MCF 10A (cell line): ENCODE measurements at regions of chr4 and their contacts with region 1.

Region 1: GRCh38 chr4:154854362-154854761 is 73.3 kb downstream of the RBM46 start:
- DNase-seq: peak; percentile 57
- H3K4me3 Mint-ChIP-seq: no peak overlapping the region
- H3K27ac Mint-ChIP-seq: no peak overlapping the region
- H3K4me1 Mint-ChIP-seq: peaks cover 6% of the 10 kb centered on the region
- H3K27me3 Mint-ChIP-seq: no peaks in the 10 kb centered on the region
- CTCF ChIP-seq: peak; percentile 67

Region 2: DNA sequence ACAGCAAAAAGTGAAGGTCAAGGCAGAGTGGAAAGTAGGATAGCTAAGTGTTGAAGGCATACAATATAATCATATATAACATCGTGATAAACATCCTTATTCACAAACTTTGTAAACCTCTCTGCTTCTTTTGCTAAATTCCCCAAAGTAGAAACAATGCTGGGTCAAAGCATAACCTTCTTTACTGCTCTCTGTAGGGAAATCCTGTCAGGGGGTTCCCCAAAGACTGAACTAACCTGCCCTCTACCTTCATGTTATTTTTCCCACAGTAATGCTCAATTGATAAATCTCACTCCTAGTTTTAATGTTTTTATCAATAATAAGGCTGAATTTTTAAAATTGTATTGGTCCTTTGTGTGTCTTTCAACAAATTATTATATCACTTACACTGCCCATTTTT is 418.5 kb before region 1 on chr4:
- CTCF ChIA-PET with region 1: no interaction called
- POLR2A ChIA-PET with region 1: no interaction called
- intact Hi-C with region 1: no loop called
- DNase-seq: no peak
- H3K4me3 Mint-ChIP-seq: no peak overlapping the region
- H3K27ac Mint-ChIP-seq: no peak overlapping the region
- H3K4me1 Mint-ChIP-seq: no peaks in the 10 kb centered on the region
- H3K27me3 Mint-ChIP-seq: no peaks in the 10 kb centered on the region
- CTCF ChIP-seq: no peak

Region 3: DNA sequence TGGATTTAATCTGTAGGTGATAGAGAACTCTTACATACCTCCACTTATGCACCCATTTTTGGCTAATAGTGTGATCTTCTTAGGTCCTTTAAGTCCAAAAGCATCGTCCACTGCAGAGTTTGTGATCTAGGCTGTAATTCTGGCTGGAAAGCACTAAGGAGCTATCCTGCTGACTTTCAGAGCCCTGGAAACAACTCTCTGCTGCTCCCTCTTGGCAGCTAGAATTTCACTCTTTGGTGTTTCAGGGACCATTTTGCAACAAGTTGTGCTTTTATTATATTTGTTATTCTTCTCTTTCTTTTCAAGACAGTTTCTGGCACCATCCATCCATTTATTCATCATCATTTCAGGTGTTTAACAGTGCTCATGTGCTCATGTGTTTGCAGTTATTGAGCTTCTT is 56.7 kb after region 1 on chr4:
- CTCF ChIA-PET with region 1: interaction called, 10 read pairs
- POLR2A ChIA-PET with region 1: no interaction called
- intact Hi-C with region 1: no loop called
- DNase-seq: peak; percentile 23
- H3K4me3 Mint-ChIP-seq: no peak overlapping the region
- H3K27ac Mint-ChIP-seq: no peak overlapping the region
- H3K4me1 Mint-ChIP-seq: peaks cover 14% of the 10 kb centered on the region
- H3K27me3 Mint-ChIP-seq: no peaks in the 10 kb centered on the region
- CTCF ChIP-seq: no peak

Region 4: GRCh38 chr4:154928640-154929257 is 74.4 kb after region 1 on chr4:
- CTCF ChIA-PET with region 1: interaction called, 19 read pairs
- POLR2A ChIA-PET with region 1: no interaction called
- intact Hi-C with region 1: loop called (anchors 1 kb)
- DNase-seq: peak; percentile 54
- H3K4me3 Mint-ChIP-seq: no peak overlapping the region
- H3K27ac Mint-ChIP-seq: no peak overlapping the region
- H3K4me1 Mint-ChIP-seq: peaks cover 5% of the 10 kb centered on the region
- H3K27me3 Mint-ChIP-seq: no peaks in the 10 kb centered on the region
- CTCF ChIP-seq: peak; percentile 46

Region 5: GRCh38 chr4:154942176-154942575 is 87.8 kb after region 1 on chr4:
- CTCF ChIA-PET with region 1: no interaction called
- POLR2A ChIA-PET with region 1: no interaction called
- intact Hi-C with region 1: no loop called
- DNase-seq: no peak
- H3K4me3 Mint-ChIP-seq: no peak overlapping the region
- H3K27ac Mint-ChIP-seq: no peak overlapping the region
- H3K4me1 Mint-ChIP-seq: peaks cover 6% of the 10 kb centered on the region
- H3K27me3 Mint-ChIP-seq: no peaks in the 10 kb centered on the region
- CTCF ChIP-seq: no peak

Region 6: GRCh38 chr4:155114790-155115189 is 260.4 kb after region 1 on chr4:
- CTCF ChIA-PET with region 1: no interaction called
- POLR2A ChIA-PET with region 1: no interaction called
- intact Hi-C with region 1: no loop called
- DNase-seq: no peak
- H3K4me3 Mint-ChIP-seq: no peak overlapping the region
- H3K27ac Mint-ChIP-seq: no peak overlapping the region
- H3K4me1 Mint-ChIP-seq: no peaks in the 10 kb centered on the region
- H3K27me3 Mint-ChIP-seq: no peaks in the 10 kb centered on the region
- CTCF ChIP-seq: no peak

Region 7: GRCh38 chr4:155170569-155170968 is 316.2 kb after region 1 on chr4:
- CTCF ChIA-PET with region 1: no interaction called
- POLR2A ChIA-PET with region 1: no interaction called
- intact Hi-C with region 1: no loop called
- DNase-seq: no peak
- H3K4me3 Mint-ChIP-seq: no peak overlapping the region
- H3K27ac Mint-ChIP-seq: no peak overlapping the region
- H3K4me1 Mint-ChIP-seq: peaks cover 8% of the 10 kb centered on the region
- H3K27me3 Mint-ChIP-seq: no peaks in the 10 kb centered on the region
- CTCF ChIP-seq: no peak

Region 8: DNA sequence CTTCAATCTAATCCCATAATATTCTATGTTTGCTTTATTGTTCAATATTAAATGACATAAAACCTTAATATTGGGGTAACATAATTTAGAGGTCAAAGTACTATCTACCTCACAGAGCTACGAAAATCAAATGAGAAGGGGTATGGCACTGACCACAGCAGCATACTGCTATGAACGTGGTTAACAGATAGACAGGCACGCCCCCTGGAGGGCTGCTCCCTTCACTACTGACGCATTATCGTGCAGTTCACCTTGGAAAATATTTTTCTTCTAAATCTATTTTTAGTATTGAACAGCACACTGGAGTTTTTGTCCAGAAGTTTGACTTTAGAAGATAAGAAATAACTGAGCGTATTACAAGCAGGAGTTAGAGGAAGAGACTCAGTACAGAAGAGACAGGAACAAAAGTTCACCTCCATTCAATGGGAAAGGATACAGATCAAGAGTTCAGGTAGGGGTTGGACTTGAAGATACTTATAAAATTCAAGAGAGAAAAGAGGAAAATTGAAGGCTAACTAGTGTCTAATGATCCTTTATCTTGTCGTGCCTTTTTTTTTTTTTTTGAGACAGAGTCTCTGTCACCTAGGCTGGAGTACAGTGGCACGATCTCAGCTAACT is 499.7 kb after region 1 on chr4:
- CTCF ChIA-PET with region 1: interaction called, 9 read pairs
- POLR2A ChIA-PET with region 1: no interaction called
- intact Hi-C with region 1: loop called (anchors 1 kb)
- DNase-seq: peak; percentile 66
- H3K4me3 Mint-ChIP-seq: no peak overlapping the region
- H3K27ac Mint-ChIP-seq: peak overlapping the region; percentile 47
- H3K4me1 Mint-ChIP-seq: peaks cover 5% of the 10 kb centered on the region
- H3K27me3 Mint-ChIP-seq: no peaks in the 10 kb centered on the region
- CTCF ChIP-seq: peak; percentile 89

Region 9: DNA sequence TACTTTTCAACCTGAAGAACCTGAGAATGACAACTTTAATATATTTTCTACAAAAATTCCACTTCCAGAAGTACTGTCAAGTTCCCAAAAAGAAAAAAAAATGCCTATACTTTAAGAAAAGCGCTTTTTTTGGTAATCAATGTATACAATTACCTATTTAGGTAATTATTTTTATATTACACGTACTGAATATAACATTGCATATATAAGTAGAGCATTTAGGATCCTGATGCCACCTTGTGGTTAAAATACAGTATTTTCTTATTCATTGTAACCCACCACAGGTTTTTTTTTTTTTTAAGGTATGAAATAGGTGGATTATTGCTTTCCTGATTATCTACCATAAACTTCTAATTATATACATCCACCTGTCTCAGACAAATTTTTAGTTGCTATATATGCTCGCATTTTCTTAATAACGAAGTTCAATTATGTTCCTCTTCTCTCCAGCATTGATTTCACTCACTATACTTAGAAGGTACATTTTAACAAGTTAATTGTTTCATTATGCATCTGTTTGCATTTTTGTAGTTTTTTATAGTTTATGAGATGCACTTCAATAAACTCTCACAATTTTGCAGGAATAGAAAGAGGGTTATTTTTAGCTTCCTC is 517.2 kb after region 1 on chr4:
- CTCF ChIA-PET with region 1: interaction called, 8 read pairs
- POLR2A ChIA-PET with region 1: no interaction called
- intact Hi-C with region 1: loop called (anchors 1 kb)
- DNase-seq: peak; percentile 40
- H3K4me3 Mint-ChIP-seq: no peak overlapping the region
- H3K27ac Mint-ChIP-seq: no peak overlapping the region
- H3K4me1 Mint-ChIP-seq: peaks cover 6% of the 10 kb centered on the region
- H3K27me3 Mint-ChIP-seq: no peaks in the 10 kb centered on the region
- CTCF ChIP-seq: peak; percentile 49

Region 10: DNA sequence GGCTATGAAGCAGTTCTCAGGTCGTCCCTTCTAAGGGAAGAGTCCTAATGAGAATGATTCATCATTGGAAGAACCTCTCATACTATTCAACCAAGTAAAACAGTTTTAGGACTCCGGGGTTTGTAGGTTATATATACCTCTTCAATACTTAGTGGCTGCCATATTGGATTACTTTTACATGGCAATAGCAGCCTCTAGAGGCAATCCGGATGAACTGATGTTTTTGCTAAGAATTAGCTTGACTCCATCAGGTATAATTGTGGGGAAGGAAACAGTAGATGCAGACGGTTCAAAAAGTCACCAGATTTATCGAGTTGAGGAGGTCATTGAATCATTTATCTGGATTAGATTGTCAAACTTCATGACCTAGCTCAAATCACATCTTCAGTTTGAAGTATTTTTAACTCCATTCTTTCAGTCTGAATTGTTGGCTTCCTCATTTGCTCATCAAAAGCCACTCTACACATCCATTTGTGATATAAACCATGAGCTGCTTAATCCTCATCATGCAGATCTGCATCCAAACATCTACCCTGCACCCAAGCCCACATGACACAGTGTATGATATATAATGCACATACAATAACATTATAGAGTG is 932.9 kb after region 1 on chr4:
- CTCF ChIA-PET with region 1: interaction called, 3 read pairs
- POLR2A ChIA-PET with region 1: interaction called, 3 read pairs
- intact Hi-C with region 1: loop called (anchors 1 kb)
- DNase-seq: peak; percentile 73
- H3K4me3 Mint-ChIP-seq: no peak overlapping the region
- H3K27ac Mint-ChIP-seq: no peak overlapping the region
- H3K4me1 Mint-ChIP-seq: peaks cover 5% of the 10 kb centered on the region
- H3K27me3 Mint-ChIP-seq: no peaks in the 10 kb centered on the region
- CTCF ChIP-seq: peak; percentile 74